BJ (cell line): ENCODE measurements at regions of chr19 and their contacts with region 1.

Region 1: DNA sequence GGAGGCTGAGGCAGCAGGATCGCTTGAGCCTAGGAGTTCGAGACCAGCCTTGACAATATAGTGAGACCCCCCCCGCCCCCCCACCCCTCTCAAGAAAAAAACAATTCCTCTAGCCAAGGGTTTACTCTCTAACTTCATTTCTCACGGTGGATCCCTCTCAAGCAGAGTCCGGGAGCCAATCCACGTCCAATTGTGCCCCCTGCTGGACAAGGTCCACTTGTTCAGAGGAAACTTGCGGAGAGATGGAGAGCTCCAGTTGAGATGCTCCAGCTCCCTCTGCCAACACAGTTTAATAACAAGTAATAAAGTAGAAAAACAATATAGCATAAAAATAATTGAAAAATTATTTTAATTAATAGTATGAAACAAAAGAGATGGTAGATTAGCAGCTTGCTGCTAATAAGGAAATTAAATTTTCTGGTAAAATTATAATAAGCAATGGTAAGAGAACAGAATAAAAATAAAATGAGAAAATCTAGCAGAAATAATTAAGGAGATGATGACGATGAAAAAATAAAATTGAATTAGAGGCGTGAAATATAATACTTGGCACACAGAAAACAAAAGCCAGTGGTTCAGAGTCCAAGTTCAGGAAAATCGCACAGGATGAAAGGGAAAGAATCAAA is 14.5 kb upstream of the SIGLEC14 start:
- DNase-seq: no peak
- H3K4me3 ChIP-seq: no peak overlapping the region
- H3K27me3 ChIP-seq: no peaks in the 10 kb centered on the region
- CTCF ChIP-seq: peak; percentile 73

Region 2: GRCh38 chr19:51473009-51473707 is 187.9 kb before region 1 on chr19:
- CTCF ChIA-PET with region 1: interaction called, 55 read pairs
- POLR2A ChIA-PET with region 1: no interaction called
- DNase-seq: no peak
- H3K4me3 ChIP-seq: no peak overlapping the region
- H3K27me3 ChIP-seq: no peaks in the 10 kb centered on the region
- CTCF ChIP-seq: peak; percentile 87

Region 3: DNA sequence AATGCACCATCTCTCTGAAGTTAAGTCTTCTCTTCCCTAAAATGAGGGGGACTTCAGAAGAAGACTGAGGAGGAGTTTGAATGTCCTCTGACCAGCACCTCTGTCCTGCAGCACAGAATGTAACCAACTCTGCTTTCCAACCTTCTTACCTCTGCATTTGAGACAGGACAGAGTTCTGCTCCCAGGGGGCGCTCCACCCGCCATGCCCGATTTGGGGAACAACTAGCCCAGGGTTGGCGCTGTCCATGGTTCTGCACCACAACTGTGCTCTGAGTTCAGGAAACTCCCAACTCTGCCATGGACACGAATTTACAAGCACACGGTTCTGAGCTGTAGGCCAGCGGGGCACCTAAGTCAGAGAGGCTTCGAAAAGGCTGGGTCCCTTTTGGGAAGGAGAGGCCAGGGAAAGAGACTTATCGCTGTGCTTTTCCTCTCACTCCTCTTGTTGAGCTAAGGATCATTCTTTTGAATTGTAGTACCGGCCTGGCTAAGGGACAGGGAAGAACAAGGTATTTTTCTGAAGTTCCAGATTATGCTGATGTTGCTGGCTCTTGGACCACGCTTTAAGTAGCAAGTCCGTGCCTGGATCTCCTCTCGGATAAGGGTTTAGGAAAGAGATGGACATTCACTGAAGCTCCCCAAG is 53.0 kb before region 1 on chr19:
- CTCF ChIA-PET with region 1: interaction called, 14 read pairs
- POLR2A ChIA-PET with region 1: no interaction called
- DNase-seq: no peak
- H3K4me3 ChIP-seq: no peak overlapping the region
- H3K27me3 ChIP-seq: no peaks in the 10 kb centered on the region
- CTCF ChIP-seq: peak; percentile 83

Region 4: GRCh38 chr19:51676566-51677083 is 15.5 kb after region 1 on chr19:
- CTCF ChIA-PET with region 1: interaction called, 11 read pairs
- POLR2A ChIA-PET with region 1: no interaction called
- DNase-seq: no peak
- H3K4me3 ChIP-seq: no peak overlapping the region
- H3K27me3 ChIP-seq: no peaks in the 10 kb centered on the region
- CTCF ChIP-seq: no peak

Region 5: GRCh38 chr19:51688672-51689571 is 27.8 kb after region 1 on chr19:
- CTCF ChIA-PET with region 1: interaction called, 14 read pairs
- POLR2A ChIA-PET with region 1: no interaction called
- DNase-seq: peak; percentile 82
- H3K4me3 ChIP-seq: peak overlapping the region; percentile 77
- H3K27me3 ChIP-seq: no peaks in the 10 kb centered on the region
- CTCF ChIP-seq: no peak

Region 6: DNA sequence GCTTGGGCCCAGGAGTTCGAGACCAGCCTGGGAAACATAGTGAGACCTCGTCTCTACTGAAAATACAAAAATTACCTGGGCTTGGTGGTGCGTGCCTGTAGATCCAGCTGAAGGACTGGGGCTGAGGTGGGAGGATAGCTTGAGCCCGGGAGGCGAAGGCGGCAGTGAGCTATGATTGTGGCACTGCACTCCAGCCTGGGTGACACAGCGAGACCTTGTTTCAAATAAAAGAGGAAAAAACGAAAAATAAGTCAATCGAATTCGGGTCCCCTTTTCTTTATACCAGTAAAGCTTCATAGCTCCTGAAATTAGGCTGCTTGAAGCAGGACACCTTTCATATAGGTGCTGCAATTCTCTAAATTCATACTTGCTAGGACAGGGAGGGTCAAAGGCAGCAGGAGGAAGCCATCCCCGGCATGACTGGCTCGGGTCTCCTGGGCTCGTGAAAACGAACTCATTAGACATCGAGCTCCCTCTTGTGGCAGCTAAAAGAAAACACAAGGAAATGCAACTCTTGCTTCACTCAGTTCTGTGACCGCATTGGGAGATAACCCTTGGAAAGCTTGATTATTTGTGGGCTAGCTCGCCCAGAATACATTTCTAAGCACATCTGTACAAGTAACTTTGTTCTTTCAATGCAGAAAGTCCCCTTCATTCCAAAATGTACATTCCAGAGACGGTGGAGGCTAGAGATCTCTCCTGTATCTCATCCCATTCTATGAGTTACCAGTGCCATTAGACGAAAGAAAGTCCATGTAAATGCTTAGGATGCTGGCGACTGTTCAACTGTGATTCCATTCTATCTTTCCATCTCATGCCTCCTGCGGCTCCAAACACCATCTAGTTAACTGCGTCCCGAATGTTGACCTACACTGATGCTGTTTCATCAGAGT is 116.7 kb after region 1 on chr19:
- CTCF ChIA-PET with region 1: interaction called, 15 read pairs
- POLR2A ChIA-PET with region 1: no interaction called
- DNase-seq: peak; percentile 11
- H3K4me3 ChIP-seq: no peak overlapping the region
- H3K27me3 ChIP-seq: no peaks in the 10 kb centered on the region
- CTCF ChIP-seq: peak; percentile 75